A549 (cell line): ENCODE measurements at regions of chr1 and their contacts with region 1.

Region 1: GRCh38 chr1:173925306-173926242 is 8.4 kb upstream of the SERPINC1 start:
- DNase-seq: no peak
- ATAC-seq: no peak
- H3K4me3 ChIP-seq: no peak overlapping the region
- H3K27ac ChIP-seq: no peak overlapping the region
- H3K4me1 ChIP-seq: 0 out of 3 replicates have a peak, but pooled peaks cover 3% of the 10 kb centered on the region
- CTCF ChIP-seq: no peak
- EP300 ChIP-seq: no peak
- POLR2A ChIP-seq: no peak
- RAD21 ChIP-seq: no peak

Region 2: DNA sequence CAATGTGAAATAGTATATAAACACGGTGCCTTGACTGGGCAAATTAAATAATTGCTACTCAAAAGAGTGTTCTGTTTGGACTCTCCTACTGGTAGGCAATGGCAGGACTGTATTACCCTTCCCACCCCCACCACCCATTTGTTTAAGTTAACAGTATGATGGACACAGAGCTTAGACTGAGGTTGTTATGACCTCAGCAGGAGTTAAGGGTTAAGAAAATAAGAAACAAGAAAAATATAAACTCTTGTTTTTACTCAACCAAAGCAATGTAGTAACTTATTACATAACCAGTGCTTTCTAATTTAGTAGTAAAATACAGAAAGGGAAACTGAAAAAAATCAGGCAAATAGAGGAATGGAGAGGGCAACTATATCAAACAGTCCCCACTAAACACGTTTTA is 11.5 kb after region 1 on chr1:
- CTCF ChIA-PET with region 1: interaction called, 3 read pairs
- POLR2A ChIA-PET with region 1: interaction called, 12 read pairs
- DNase-seq: no peak
- ATAC-seq: no peak
- H3K4me3 ChIP-seq: no peak overlapping the region
- H3K27ac ChIP-seq: no peak overlapping the region
- H3K4me1 ChIP-seq: peaks cover 8% of the 10 kb centered on the region; the same call in 2 of the 3 replicates
- CTCF ChIP-seq: no peak
- EP300 ChIP-seq: no peak
- POLR2A ChIP-seq: no peak
- RAD21 ChIP-seq: no peak

Region 3: GRCh38 chr1:173960625-173961024 is 35.1 kb after region 1 on chr1:
- CTCF ChIA-PET with region 1: no interaction called
- POLR2A ChIA-PET with region 1: no interaction called
- DNase-seq: no peak
- ATAC-seq: no peak
- H3K4me3 ChIP-seq: no peak overlapping the region
- H3K27ac ChIP-seq: no peak overlapping the region
- H3K4me1 ChIP-seq: no peaks in the 10 kb centered on the region
- CTCF ChIP-seq: no peak
- EP300 ChIP-seq: no peak
- POLR2A ChIP-seq: no peak
- RAD21 ChIP-seq: no peak

Region 4: DNA sequence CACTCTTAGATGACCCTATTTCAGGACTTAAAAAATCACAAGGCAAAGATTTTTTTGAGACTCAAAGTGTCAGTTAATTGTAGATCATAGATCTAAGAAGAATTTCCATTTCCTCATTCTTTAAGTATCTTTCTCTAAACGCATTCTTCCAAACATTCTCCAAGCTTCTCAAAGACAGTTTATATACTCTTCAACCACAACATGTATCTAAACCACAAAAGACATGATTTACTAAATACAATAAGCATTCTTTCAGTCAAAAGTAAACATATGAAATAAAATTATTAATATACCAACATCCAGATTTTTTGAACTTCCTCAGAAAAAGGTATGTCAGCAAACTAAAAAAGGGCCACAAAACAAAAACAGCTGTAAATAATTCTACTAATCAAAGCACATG is 72.2 kb after region 1 on chr1:
- CTCF ChIA-PET with region 1: no interaction called
- POLR2A ChIA-PET with region 1: no interaction called
- DNase-seq: no peak
- ATAC-seq: no peak
- H3K4me3 ChIP-seq: no peak overlapping the region
- H3K27ac ChIP-seq: no peak overlapping the region
- H3K4me1 ChIP-seq: peaks cover 12% of the 10 kb centered on the region; the same call in 2 of the 3 replicates
- CTCF ChIP-seq: no peak
- EP300 ChIP-seq: no peak
- POLR2A ChIP-seq: no peak
- RAD21 ChIP-seq: no peak